PC-9 (cell line): ENCODE measurements at regions of chr1 and their contacts with region 1.

Region 1: DNA sequence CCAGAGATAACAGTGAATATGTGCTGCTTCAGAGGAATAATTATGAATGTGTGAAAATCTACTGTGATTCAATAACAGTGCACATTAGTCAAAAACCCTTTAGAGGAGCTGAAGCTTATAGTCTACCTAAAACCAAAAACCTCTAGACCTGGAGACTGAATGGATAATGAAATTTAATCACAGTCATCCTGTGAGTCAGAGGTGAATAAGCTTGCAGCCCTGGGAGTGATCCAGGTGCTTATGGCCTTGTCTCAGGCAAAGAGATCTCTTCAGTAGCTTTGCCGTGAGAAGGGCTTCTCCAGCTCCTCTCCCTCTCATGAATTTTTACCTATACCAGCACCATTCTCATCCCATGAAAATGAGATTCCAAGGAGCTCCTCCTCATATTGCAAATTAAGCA is 81.3 kb upstream of the RGS4 start:
- DNase-seq: peak; percentile 12 to 38
- H3K4me3 ChIP-seq: no peak overlapping the region
- H3K27ac ChIP-seq: 0 out of 2 replicates have a peak overlapping the region, but pooled peaks have one; percentile 5
- H3K4me1 ChIP-seq: peaks cover 10% of the 10 kb centered on the region
- H3K27me3 ChIP-seq: no peaks in the 10 kb centered on the region
- CTCF ChIP-seq: no peak

Region 2: DNA sequence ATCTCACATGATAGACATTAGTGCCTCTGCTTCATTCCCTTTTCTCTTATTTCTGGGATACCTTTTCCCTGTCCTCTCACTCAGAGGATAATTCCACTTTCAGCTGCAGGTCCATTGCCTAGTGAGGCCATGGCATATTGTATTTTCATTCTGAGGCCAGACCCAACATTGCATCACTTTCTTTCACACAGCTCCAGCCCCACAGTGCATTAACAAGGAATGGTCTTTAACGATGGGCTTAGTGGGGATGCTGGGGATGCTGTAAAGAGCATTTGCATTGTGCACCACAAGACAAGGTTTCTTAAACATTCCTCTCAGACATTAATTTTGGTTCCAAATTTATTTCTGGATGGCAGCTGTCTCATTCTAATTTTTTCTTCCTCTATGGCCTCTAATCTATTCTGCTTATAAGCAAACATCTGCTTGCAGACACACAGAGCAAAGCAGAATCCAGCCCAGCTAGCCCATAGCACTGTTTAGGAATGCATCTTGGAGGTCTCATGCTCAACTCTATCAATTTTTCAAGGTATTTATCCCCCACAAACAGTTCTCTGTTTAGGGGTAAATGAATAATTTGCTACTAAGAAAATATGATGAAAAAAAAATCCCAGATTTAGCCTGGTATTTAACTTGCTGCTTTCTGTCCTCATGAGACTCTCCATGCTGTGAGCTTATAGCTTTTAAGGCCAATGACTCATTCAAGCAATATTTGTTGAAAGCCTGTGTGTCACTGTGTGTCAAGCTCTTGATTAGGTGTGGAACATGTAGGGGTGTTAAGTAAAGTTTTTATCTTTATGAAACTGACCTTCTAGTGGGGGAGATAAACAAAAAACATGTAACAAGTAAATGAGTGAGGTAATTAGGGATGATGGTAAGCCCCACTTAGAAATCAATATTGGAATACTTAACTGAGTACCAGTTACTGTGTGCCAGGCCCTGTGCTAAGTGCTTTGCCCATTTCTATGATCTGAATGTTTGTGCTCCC is 82.4 kb before region 1 on chr1:
- CTCF ChIA-PET with region 1: no interaction called
- POLR2A ChIA-PET with region 1: no interaction called
- intact Hi-C with region 1: loop called (anchors 5 kb)
- DNase-seq: peak in 1 of 2 experiments; percentile 77
- H3K4me3 ChIP-seq: no peak overlapping the region
- H3K27ac ChIP-seq: 0 out of 2 replicates have a peak overlapping the region, but pooled peaks have one; percentile 5
- H3K4me1 ChIP-seq: peaks cover 25% of the 10 kb centered on the region
- H3K27me3 ChIP-seq: no peaks in the 10 kb centered on the region
- CTCF ChIP-seq: no peak

Region 3: DNA sequence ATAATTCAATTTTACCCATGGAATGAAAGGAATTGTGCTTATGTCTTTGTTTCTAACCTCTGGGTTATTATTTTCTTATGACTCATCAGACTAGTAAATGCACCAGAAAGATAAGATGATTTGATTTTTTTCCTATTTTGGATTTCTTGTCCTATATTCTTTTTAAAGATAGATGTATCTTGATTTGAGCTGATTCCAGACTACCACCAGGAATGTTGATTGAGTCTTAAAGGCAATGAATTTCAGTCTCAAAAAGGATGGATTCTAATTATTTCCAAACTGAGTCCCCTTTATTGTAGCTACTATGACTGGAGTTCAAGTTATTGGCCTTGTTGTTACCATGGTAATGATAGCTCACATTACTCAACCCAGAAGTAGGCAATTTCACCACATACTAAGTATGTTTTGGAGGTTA is 14.5 kb before region 1 on chr1:
- CTCF ChIA-PET with region 1: no interaction called
- POLR2A ChIA-PET with region 1: interaction called, 4 read pairs
- intact Hi-C with region 1: loop called (anchors 1 kb)
- DNase-seq: no peak
- H3K4me3 ChIP-seq: no peak overlapping the region
- H3K27ac ChIP-seq: no peak overlapping the region
- H3K4me1 ChIP-seq: peaks cover 13% of the 10 kb centered on the region
- H3K27me3 ChIP-seq: no peaks in the 10 kb centered on the region
- CTCF ChIP-seq: no peak